Activated CD8-positive, alpha-beta T cell treated with anti-CD3 and anti-CD28 coated beads for 36 hours (primary cell): ENCODE measurements at regions of chr1 and their contacts with region 1.

Region 1: DNA sequence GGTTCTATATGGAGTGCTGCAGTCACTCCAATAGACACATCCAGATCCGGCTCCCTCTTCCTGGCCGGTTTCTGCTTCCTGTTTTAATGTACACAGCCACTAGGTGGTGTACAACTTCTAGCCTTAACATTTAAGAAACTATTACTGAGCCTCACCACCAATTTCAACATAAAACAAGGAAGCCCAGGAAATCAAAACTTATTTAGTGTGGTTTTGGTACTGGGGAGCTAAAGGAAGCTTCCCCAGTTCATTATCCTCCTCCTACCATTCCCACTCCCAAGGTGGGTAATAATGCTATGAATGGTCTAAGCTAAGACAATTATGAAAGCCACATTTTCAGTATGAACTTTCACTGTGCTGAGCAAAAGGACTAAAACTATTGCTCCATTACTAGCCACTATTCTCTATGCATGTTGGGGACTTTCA is 25.5 kb upstream of the MTMR11 start:
- DNase-seq: peak; percentile 57
- ATAC-seq: peak; percentile 84
- H3K4me3 Mint-ChIP-seq: no peak overlapping the region
- H3K27ac Mint-ChIP-seq: no peak overlapping the region
- H3K4me1 Mint-ChIP-seq: peaks cover 9% of the 10 kb centered on the region
- H3K27me3 Mint-ChIP-seq: no peaks in the 10 kb centered on the region
- CTCF ChIP-seq: peak; percentile 90

Region 2: DNA sequence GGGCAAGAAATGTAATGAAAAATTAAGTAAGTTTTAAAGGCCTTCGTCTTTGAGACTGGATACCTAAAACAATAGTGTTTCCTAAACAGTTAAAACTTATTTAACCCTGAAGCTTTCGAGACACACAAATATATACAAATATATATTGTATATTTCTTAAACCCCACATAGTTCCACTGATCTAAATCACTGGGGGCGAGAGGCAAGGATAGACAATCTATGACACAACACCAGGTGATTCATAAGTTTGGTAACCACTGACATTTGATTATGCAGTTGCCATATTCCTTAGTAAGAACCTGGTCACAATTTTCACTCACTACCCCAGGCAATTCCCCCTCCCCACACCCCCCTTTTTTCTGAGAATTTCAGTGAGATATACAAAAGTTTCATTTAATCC is 118.0 kb before region 1 on chr1:
- CTCF ChIA-PET with region 1: no interaction called
- POLR2A ChIA-PET with region 1: no interaction called
- intact Hi-C with region 1: no loop called
- DNase-seq: peak; percentile 45
- ATAC-seq: no peak
- H3K4me3 Mint-ChIP-seq: peak overlapping the region; percentile 88
- H3K27ac Mint-ChIP-seq: peak overlapping the region; percentile 86
- H3K4me1 Mint-ChIP-seq: peaks cover 42% of the 10 kb centered on the region
- H3K27me3 Mint-ChIP-seq: no peaks in the 10 kb centered on the region
- CTCF ChIP-seq: no peak

Region 3: DNA sequence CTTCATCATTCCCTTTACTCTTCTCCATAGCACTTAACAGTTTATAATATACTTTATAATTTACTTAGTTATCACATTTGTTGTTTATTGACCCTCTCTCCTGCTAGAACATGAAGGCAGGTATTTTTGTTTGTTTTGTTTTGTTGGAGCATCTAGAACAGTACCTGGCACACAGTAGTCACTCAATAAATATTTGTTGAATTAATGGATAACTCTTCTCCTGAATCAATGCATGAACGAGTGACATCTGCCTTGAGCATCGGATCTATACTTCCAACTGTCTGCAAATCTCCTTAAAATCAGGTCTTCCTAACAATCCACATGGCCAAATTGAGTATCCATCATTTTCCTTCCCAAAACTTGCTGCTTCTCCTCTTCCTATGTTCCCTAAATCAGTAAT is 10.4 kb after region 1 on chr1:
- CTCF ChIA-PET with region 1: interaction called, 11 read pairs
- POLR2A ChIA-PET with region 1: no interaction called
- intact Hi-C with region 1: no loop called
- DNase-seq: no peak
- ATAC-seq: no peak
- H3K4me3 Mint-ChIP-seq: no peak overlapping the region
- H3K27ac Mint-ChIP-seq: no peak overlapping the region
- H3K4me1 Mint-ChIP-seq: no peaks in the 10 kb centered on the region
- H3K27me3 Mint-ChIP-seq: no peaks in the 10 kb centered on the region
- CTCF ChIP-seq: no peak

Region 4: GRCh38 chr1:150034336-150034735 is 72.2 kb after region 1 on chr1:
- CTCF ChIA-PET with region 1: interaction called, 12 read pairs
- POLR2A ChIA-PET with region 1: no interaction called
- intact Hi-C with region 1: no loop called
- DNase-seq: no peak
- ATAC-seq: no peak
- H3K4me3 Mint-ChIP-seq: no peak overlapping the region
- H3K27ac Mint-ChIP-seq: no peak overlapping the region
- H3K4me1 Mint-ChIP-seq: no peaks in the 10 kb centered on the region
- H3K27me3 Mint-ChIP-seq: no peaks in the 10 kb centered on the region
- CTCF ChIP-seq: no peak

Region 5: DNA sequence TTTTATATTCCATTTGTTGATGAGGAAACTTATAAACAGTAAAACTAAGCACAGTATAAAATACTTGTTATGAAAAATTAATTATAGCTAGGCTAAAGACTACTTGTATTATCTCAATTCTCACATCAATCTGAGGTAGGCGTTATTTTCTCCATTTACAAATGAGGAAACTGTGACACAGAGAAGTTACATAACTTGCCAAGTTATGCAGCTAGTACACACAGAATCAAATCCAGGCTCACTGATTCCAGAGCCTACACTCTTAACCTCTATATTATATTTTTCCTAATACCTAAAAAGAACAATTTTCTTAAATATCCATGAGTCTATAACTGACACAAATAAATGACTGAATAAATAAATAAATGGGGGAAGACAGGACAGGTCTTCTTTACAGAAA is 94.3 kb after region 1 on chr1:
- CTCF ChIA-PET with region 1: interaction called, 17 read pairs
- POLR2A ChIA-PET with region 1: no interaction called
- intact Hi-C with region 1: no loop called
- DNase-seq: no peak
- ATAC-seq: no peak
- H3K4me3 Mint-ChIP-seq: no peak overlapping the region
- H3K27ac Mint-ChIP-seq: no peak overlapping the region
- H3K4me1 Mint-ChIP-seq: no peaks in the 10 kb centered on the region
- H3K27me3 Mint-ChIP-seq: peaks cover 3% of the 10 kb centered on the region
- CTCF ChIP-seq: no peak

Region 6: GRCh38 chr1:150168960-150169601 is 206.9 kb after region 1 on chr1:
- CTCF ChIA-PET with region 1: interaction called, 14 read pairs
- POLR2A ChIA-PET with region 1: no interaction called
- intact Hi-C with region 1: loop called (anchors 5 kb)
- DNase-seq: peak; percentile 82
- ATAC-seq: peak; percentile 79
- H3K4me3 Mint-ChIP-seq: no peak overlapping the region
- H3K27ac Mint-ChIP-seq: no peak overlapping the region
- H3K4me1 Mint-ChIP-seq: no peaks in the 10 kb centered on the region
- H3K27me3 Mint-ChIP-seq: no peaks in the 10 kb centered on the region
- CTCF ChIP-seq: peak; percentile 72